Activated CD4-positive, alpha-beta T cell treated with anti-CD3 and anti-CD28 coated beads for 36 hours (primary cell): ENCODE measurements at regions of chr3 and their contacts with region 1.

Region 1: DNA sequence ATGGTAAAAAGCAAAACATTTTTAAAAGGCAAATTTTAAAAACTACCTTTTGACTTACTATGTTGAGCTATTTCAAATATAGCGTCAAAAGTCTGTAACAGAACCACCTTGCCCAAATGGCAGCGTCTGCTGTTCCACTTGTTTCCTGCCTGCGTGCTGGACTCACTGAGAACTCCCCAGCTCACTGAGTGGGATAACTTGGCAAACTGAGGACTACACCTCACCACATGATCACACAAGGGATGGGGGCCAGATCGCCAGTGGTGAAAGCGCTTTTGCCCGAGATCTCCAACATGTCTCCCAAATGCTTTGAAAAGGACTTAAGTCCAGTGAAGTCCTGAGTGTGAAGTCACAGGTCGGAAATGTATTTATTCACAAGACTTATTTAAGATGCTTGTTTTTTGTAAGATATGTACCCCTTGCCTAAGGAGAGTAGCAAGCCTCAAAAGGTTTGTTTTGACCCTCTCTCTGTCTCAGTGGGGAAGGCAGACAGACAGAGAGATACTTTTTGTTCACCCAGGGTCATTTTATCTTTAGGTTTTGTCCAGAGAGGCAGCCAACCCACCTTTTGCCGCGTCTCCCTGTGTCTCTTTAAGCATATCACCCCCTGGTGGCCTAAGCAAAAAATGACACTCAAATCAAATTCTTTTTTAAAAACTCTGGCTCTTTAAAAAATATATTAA is 192.6 kb downstream of the PDZRN3 start:
- DNase-seq: peak; percentile 15
- ATAC-seq: no peak
- H3K4me3 Mint-ChIP-seq: no peak overlapping the region
- H3K27ac Mint-ChIP-seq: no peak overlapping the region
- H3K4me1 Mint-ChIP-seq: no peaks in the 10 kb centered on the region
- H3K27me3 Mint-ChIP-seq: peaks cover 12% of the 10 kb centered on the region

Region 2: GRCh38 chr3:73100741-73101559 is 331.2 kb before region 1 on chr3:
- CTCF ChIA-PET with region 1: interaction called, 3 read pairs
- POLR2A ChIA-PET with region 1: no interaction called
- intact Hi-C with region 1: loop called in 1 of 2 experiments (anchors 1 kb)
- DNase-seq: peak; percentile 88
- ATAC-seq: peak; percentile 72
- H3K4me3 Mint-ChIP-seq: no peak overlapping the region
- H3K27ac Mint-ChIP-seq: no peak overlapping the region
- H3K4me1 Mint-ChIP-seq: no peaks in the 10 kb centered on the region
- H3K27me3 Mint-ChIP-seq: peaks cover 2% of the 10 kb centered on the region

Region 3: DNA sequence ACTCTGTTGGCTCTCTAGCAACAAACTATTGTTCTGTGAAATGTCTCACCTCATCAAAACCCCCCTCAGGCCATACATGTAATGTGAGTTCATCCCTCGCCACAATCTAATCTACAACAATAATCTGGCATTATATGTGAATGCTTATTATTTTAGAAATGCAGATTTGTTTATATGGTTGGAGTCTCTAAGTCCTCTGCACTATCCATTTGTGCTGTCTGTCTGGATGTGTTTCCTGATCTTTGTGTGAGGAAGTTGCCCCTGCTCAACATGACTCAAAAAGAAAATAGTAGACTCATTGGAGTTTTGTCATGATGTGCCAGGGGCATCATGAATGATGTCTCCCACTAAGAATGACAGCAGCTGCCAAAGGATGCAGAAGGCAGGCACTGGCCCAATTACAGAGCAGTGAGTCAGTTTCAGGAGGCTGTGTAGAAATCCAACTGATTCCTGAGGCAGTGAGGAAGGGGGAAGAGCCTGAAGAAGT is 354.2 kb after region 1 on chr3:
- CTCF ChIA-PET with region 1: no interaction called
- POLR2A ChIA-PET with region 1: no interaction called
- intact Hi-C with region 1: no loop called
- DNase-seq: no peak
- ATAC-seq: no peak
- H3K4me3 Mint-ChIP-seq: no peak overlapping the region
- H3K27ac Mint-ChIP-seq: no peak overlapping the region
- H3K4me1 Mint-ChIP-seq: no peaks in the 10 kb centered on the region
- H3K27me3 Mint-ChIP-seq: no peaks in the 10 kb centered on the region